ENCODE measurements at regions of chr17 and their contacts with region 1.

Region 1: DNA sequence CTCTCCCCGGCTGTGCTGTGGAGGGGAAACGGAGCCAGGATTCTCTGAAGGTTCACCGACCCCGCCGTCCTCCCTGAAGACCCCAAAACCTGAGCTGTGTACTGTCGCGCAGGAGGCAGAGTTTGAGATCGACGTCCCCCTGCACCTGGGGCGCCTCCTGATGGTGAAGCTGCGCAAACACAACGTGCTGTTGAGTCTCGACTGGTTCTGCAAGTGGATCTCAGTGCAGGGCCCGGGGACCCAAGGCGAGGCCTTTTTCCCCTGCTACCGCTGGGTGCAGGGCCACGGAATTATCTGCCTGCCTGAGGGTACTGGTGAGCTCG is 62.6 kb upstream of the TEKT1 start:
- DNase-seq: peak in 1 of 2 donors; percentile 28
- ATAC-seq: peak in 1 of 3 donors; percentile 38
- H3K4me3 ChIP-seq: no peak overlapping the region
- H3K4me3 Mint-ChIP-seq: no peak overlapping the region
- H3K27ac ChIP-seq: no peak overlapping the region
- H3K27ac Mint-ChIP-seq: no peak overlapping the region
- H3K4me1 ChIP-seq: no peaks in the 10 kb centered on the region
- H3K4me1 Mint-ChIP-seq: no peaks in the 10 kb centered on the region
- H3K27me3 ChIP-seq: no peaks in the 10 kb centered on the region
- H3K27me3 Mint-ChIP-seq: peaks cover 17 to 36% of the 10 kb centered on the region in 2 donors
- CTCF ChIP-seq: no peak

Region 2: GRCh38 chr17:6843241-6843880 is 50.8 kb before region 1 on chr17:
- intact Hi-C with region 1: loop called (anchors 5 kb)
- DNase-seq: peak in 1 of 2 donors; percentile 72
- ATAC-seq: peak; percentile 55 to 62 (median 61)
- H3K4me3 ChIP-seq: no peak overlapping the region
- H3K4me3 Mint-ChIP-seq: no peak overlapping the region
- H3K27ac ChIP-seq: no peak overlapping the region
- H3K27ac Mint-ChIP-seq: no peak overlapping the region
- H3K4me1 ChIP-seq: peaks cover 2% of the 10 kb centered on the region
- H3K4me1 Mint-ChIP-seq: no peaks in the 10 kb centered on the region
- H3K27me3 ChIP-seq: peaks cover 2% of the 10 kb centered on the region
- H3K27me3 Mint-ChIP-seq: peaks cover 27 to 38% of the 10 kb centered on the region in 2 donors
- CTCF ChIP-seq: peak; percentile 66